Left cardiac atrium (tissue), 4 donors: ENCODE measurements at regions of chr2 and their contacts with region 1.

Region 1: DNA sequence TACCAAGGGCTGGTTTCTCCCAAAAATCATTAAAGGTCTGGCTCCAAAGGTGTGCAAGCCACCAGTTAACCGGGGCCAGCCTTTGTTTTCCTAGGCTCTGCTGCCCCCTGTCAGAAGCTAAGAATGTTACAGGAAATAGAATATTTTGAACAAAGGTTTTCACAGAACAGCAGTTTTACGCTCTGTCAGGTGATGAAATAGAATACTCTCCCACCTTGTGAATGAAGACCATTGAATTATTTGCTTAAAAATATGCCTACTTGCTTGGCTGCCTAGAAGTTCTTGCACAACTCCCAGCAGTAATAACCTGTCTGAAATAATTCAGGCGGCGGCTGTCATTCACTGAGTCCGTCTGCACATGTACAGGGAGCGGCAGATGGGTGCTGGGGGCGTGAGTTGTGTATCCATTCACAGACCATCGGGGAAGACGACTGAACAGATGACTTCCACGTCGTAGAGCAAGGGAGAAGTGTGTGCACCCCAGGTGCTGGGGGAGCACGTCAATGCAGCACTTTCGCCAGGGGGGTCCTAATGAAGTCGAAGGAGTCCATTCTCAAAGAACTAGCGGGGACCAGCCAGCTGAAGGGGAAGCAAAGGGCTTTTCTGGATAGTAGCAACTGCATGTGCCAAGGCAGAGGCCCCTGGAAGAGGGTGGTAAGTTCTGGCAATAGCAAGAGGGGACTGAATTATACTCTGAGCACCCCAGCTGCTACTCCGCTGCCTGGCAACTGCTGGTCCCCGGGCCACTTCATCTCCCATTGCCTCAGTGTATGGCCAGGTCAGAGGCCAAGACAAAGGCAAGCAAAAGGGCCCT is 56.1 kb downstream of the SF3B1 start:
- DNase-seq: peak; percentile 37
- ATAC-seq: peak; percentile 72 to 85

Region 2: DNA sequence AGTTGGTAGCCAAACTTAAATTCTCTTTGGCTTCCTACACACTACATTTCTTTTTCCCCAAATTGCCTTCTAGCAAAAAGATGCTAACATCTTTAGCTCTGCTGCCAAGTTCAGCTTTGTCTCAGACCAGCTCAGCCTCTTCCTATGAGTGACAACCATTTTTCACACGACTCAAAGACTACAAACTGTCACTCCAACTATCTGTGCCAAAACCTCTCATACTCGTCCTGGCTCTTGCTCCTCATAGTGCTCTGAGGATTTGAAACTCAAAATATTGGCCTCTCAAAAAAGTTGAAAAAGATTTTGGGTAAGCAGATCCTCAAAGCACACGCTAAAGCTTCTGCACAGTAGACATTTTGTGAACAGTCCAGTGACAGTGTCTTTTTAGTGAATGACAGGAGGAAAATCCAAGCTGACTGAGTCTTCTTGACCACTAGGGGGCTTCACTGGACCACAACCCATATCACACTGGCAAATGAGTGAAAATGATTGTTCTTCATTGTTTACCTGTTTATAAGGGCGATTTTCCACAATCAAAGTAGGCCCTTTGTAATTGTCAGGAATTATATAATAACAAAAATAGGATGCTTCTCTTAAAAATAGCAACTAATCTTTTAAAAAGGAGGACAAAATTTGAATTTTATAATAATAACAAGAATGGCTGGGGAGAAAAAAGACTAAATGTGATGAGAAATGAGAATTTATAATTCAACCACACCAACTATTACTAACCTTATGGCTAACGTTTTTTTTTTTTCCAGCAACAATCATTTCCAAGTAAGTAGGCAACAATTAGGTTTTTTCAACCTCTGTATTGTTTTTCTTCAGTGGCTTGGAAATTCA is 366.7 kb before region 1 on chr2:
- intact Hi-C with region 1: loop called (anchors 5 kb)
- DNase-seq: no peak
- ATAC-seq: peak; percentile 59 to 67

Region 3: GRCh38 chr2:197191177-197191939 is 187.3 kb before region 1 on chr2:
- intact Hi-C with region 1: loop called in 1 of 2 experiments (anchors 2 kb)
- DNase-seq: no peak
- ATAC-seq: peak in 1 of 2 donors; percentile 37